ENCODE measurements at regions of chr19 and their contacts with region 1.

Region 1: GRCh38 chr19:41883821-41884733 is 1.1 kb downstream of the ARHGEF1 start:
- DNase-seq: peak; percentile 94
- H3K4me3 ChIP-seq: peak overlapping the region; percentile 59 to 88 (median 88)
- H3K27ac ChIP-seq: peak overlapping the region; percentile 33
- H3K4me1 ChIP-seq: peaks cover 19% of the 10 kb centered on the region
- H3K27me3 ChIP-seq: no peaks in the 10 kb centered on the region
- CTCF ChIP-seq: peak in 1 of 2 donors; percentile 18
- POLR2A ChIP-seq: peak; percentile 86

Region 2: GRCh38 chr19:41859618-41860418 is 24.3 kb before region 1 on chr19 and contains the start of gene RPS19:
- CTCF ChIA-PET with region 1: interaction called, 3 read pairs
- POLR2A ChIA-PET with region 1: interaction called, 7 read pairs
- dilution Hi-C with region 1: no loop called
- intact Hi-C with region 1: loop called (anchors 1 kb)
- DNase-seq: peak; percentile 99
- H3K4me3 ChIP-seq: peak within 1 kb of the TSS; percentile 78 to 86 (median 85)
- H3K27ac ChIP-seq: peak within 1 kb of the TSS; percentile 93
- H3K4me1 ChIP-seq: peaks cover 39% of the 10 kb centered on the region
- H3K27me3 ChIP-seq: no peaks in the 10 kb centered on the region
- CTCF ChIP-seq: peak; percentile 43 to 65
- POLR2A ChIP-seq: peak; percentile 86
- total RNA-seq, gene RPS19: 2,195 and 2,234 TPM in 2 replicates

Region 3: DNA sequence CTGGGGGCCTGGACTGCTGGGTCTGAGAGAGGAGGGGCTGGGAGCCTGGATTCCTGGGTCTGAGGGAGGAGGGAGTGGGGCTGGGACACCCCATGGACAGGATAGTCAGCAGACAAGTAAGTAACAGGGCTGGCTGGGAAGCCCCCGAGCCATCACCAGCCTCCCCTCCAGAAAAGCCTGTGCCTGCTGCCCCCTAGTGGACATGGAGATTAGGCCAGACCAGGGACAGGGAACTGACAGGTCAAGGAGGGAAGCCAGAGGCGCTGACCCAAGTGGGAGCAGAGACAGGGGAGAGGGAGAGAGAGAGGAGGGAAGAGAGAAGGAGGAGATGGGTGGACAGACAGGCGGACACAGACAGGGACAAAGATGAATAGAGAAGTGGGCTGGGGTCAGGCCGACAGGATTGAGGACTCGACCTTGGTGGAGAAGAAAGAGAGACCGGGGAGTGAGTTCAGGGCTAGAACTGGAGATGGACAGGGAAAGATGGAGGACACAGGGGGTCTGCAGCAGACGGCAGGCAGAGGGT is 50.8 kb after region 1 on chr19:
- CTCF ChIA-PET with region 1: interaction called, 3 read pairs
- POLR2A ChIA-PET with region 1: no interaction called
- dilution Hi-C with region 1: no loop called
- intact Hi-C with region 1: loop called (anchors 2 kb)
- DNase-seq: peak; percentile 45
- H3K4me3 ChIP-seq: no peak overlapping the region
- H3K27ac ChIP-seq: no peak overlapping the region
- H3K4me1 ChIP-seq: no peaks in the 10 kb centered on the region
- H3K27me3 ChIP-seq: peaks cover 55 to 63% of the 10 kb centered on the region in 2 experiments
- CTCF ChIP-seq: peak; percentile 86 to 88
- POLR2A ChIP-seq: no peak